ENCODE measurements at regions of chr7 and their contacts with region 1.

Region 1: GRCh38 chr7:150898475-150899011 is 46.2 kb downstream of the AOC1 start:
- DNase-seq: peak; percentile 73 to 94 (median 82)
- H3K4me3 ChIP-seq: no peak overlapping the region
- H3K27ac ChIP-seq: no peak overlapping the region
- H3K4me1 ChIP-seq: peaks cover 12 to 16% of the 10 kb centered on the region in 2 donors
- H3K27me3 ChIP-seq: no peaks in the 10 kb centered on the region
- CTCF ChIP-seq: peak; percentile 92 to 97 (median 94)
- POLR2A ChIP-seq: no peak

Region 2: DNA sequence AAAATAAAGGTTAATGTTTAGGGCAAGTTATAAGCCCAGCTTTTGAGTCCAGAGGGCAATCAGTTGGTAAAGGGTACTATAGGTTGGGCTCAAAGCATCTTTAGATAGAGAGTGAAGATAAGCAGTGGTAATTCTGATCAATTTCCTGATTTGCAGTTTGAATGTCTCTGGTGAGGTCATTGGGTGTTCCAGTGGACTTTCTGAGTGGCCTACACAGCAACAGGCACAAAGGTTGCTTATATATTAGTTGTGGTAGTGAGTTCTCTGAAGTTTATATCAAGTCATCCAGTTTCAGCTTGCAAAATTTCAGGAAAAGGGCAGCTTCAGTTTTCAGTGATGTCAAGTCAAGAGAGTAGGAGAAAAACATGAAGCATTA is 132.2 kb before region 1 on chr7:
- intact Hi-C with region 1: no loop called
- DNase-seq: no peak
- H3K4me3 ChIP-seq: no peak overlapping the region
- H3K27ac ChIP-seq: no peak overlapping the region
- H3K4me1 ChIP-seq: no peaks in the 10 kb centered on the region
- H3K27me3 ChIP-seq: no peaks in the 10 kb centered on the region
- CTCF ChIP-seq: no peak
- POLR2A ChIP-seq: no peak

Region 3: GRCh38 chr7:150838970-150839650 is 59.4 kb before region 1 on chr7:
- intact Hi-C with region 1: no loop called
- DNase-seq: peak in 4 of 7 donors; percentile 29 to 57 (median 55)
- H3K4me3 ChIP-seq: no peak overlapping the region
- H3K27ac ChIP-seq: no peak overlapping the region
- H3K4me1 ChIP-seq: no peaks in the 10 kb centered on the region
- H3K27me3 ChIP-seq: no peaks in the 10 kb centered on the region
- CTCF ChIP-seq: no peak
- POLR2A ChIP-seq: no peak

Region 4: DNA sequence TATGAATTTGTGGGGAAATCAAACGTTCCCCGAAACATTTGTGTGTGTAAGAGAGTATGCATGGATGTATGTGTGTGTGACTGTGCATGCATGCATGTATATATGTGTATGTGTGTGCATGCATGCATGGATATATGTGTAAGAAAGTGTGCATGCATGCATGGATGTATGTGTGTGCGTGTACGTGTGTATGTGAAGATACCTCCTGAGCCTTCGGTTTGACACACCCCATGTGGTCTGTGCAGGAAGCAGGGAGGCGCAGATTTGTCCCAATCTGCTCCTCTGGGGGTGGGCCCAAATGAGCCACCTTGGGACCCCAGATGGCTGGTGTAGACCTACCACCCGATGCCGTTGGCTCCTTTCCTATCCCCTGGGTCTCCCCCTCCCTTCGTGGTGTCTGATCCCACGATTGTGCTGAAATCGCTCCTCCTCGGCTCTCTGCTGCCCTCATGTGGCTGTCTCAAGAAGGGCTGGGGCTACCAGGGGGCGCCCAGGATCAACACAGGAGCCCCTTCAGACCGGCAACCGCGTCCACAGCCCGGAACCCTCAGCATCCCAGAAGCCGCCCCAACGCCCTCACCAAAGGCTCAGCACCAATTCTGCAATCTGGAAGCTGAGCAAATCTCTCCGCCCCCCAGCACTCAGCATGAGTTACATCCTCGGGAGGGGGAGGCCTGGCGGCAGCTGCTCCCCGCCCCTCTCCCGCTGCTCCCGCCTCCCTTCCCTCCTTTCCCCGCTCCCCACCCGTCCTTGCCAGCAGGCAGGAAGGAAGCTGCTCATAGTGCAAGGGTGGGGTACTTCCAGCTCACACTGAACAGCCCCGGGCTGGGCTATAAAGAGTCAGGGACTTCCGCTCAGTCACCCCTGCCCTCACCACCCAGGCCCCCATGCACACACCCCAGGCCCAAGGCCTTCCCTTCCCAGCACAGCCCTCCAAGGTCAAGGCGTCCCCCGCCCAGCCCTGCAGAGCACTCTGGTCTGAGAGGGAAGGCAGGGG is 90.0 kb after region 1 on chr7:
- intact Hi-C with region 1: loop called (anchors 1 to 2 kb)
- DNase-seq: peak in 6 of 7 donors; percentile 47 to 81 (median 62)
- H3K4me3 ChIP-seq: no peak overlapping the region
- H3K27ac ChIP-seq: peak overlapping the region in 2 of 5 donors; percentile 66 to 80
- H3K4me1 ChIP-seq: no peaks in the 10 kb centered on the region
- H3K27me3 ChIP-seq: no peaks in the 10 kb centered on the region
- CTCF ChIP-seq: peak; percentile 72 to 92 (median 84)
- POLR2A ChIP-seq: no peak